Activated naive CD4-positive, alpha-beta T cell treated with anti-CD3 and anti-CD28 coated beads for 36 hours (primary cell): ENCODE measurements at regions of chr3 and their contacts with region 1.

Region 1: GRCh38 chr3:72134989-72135451 is 350.1 kb upstream of the PROK2 start:
- DNase-seq: peak; percentile 18
- H3K4me3 Mint-ChIP-seq: peak overlapping the region; percentile 49
- H3K27ac Mint-ChIP-seq: peak overlapping the region; percentile 78
- H3K4me1 Mint-ChIP-seq: peaks cover 47% of the 10 kb centered on the region
- H3K27me3 Mint-ChIP-seq: peaks cover 4% of the 10 kb centered on the region

Region 2: DNA sequence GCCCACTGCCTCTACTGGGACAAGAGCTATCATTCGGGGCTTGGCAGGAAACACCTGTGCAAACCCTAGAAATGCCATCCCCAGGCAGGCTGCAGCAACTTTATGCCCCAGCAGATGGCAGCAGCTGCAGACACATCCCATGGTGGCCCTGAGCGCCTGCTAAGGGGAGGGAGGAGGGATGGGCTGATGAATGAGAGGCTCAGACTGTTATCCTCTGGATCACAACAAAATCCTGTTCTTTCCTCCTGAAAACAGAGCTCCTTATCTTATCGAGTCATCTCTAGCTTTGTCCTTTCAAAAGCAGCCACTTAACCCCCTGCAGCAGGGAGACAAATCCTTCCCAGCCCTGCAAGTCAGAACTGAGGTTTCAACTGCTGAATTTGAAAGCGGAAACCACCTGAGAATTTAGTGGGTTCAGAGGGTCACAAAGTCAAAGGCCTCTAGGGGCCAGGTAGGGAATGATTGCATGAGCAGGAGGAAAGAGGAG is 259.5 kb before region 1 on chr3:
- CTCF ChIA-PET with region 1: interaction called, 4 read pairs
- intact Hi-C with region 1: loop called (anchors 1 kb)
- DNase-seq: peak; percentile 92
- H3K4me3 Mint-ChIP-seq: no peak overlapping the region
- H3K27ac Mint-ChIP-seq: peak overlapping the region; percentile 76
- H3K4me1 Mint-ChIP-seq: peaks cover 35% of the 10 kb centered on the region
- H3K27me3 Mint-ChIP-seq: no peaks in the 10 kb centered on the region

Region 3: GRCh38 chr3:71984843-71985613 is 150.0 kb before region 1 on chr3:
- CTCF ChIA-PET with region 1: no interaction called
- intact Hi-C with region 1: loop called (anchors 1 kb)
- DNase-seq: peak; percentile 76
- H3K4me3 Mint-ChIP-seq: peak overlapping the region; percentile 48
- H3K27ac Mint-ChIP-seq: peak overlapping the region; percentile 84
- H3K4me1 Mint-ChIP-seq: peaks cover 43% of the 10 kb centered on the region
- H3K27me3 Mint-ChIP-seq: peaks cover 6% of the 10 kb centered on the region

Region 4: GRCh38 chr3:72339116-72340030 is 204.4 kb after region 1 on chr3:
- CTCF ChIA-PET with region 1: no interaction called
- intact Hi-C with region 1: loop called (anchors 1 kb)
- DNase-seq: no peak
- H3K4me3 Mint-ChIP-seq: no peak overlapping the region
- H3K27ac Mint-ChIP-seq: no peak overlapping the region
- H3K4me1 Mint-ChIP-seq: peaks cover 36% of the 10 kb centered on the region
- H3K27me3 Mint-ChIP-seq: no peaks in the 10 kb centered on the region

Region 5: GRCh38 chr3:72447059-72447946 is 312.3 kb after region 1 on chr3:
- CTCF ChIA-PET with region 1: no interaction called
- intact Hi-C with region 1: loop called (anchors 1 kb)
- DNase-seq: peak; percentile 88
- H3K4me3 Mint-ChIP-seq: peak overlapping the region; percentile 54
- H3K27ac Mint-ChIP-seq: no peak overlapping the region
- H3K4me1 Mint-ChIP-seq: peaks cover 37% of the 10 kb centered on the region
- H3K27me3 Mint-ChIP-seq: peaks cover 12% of the 10 kb centered on the region

Region 6: DNA sequence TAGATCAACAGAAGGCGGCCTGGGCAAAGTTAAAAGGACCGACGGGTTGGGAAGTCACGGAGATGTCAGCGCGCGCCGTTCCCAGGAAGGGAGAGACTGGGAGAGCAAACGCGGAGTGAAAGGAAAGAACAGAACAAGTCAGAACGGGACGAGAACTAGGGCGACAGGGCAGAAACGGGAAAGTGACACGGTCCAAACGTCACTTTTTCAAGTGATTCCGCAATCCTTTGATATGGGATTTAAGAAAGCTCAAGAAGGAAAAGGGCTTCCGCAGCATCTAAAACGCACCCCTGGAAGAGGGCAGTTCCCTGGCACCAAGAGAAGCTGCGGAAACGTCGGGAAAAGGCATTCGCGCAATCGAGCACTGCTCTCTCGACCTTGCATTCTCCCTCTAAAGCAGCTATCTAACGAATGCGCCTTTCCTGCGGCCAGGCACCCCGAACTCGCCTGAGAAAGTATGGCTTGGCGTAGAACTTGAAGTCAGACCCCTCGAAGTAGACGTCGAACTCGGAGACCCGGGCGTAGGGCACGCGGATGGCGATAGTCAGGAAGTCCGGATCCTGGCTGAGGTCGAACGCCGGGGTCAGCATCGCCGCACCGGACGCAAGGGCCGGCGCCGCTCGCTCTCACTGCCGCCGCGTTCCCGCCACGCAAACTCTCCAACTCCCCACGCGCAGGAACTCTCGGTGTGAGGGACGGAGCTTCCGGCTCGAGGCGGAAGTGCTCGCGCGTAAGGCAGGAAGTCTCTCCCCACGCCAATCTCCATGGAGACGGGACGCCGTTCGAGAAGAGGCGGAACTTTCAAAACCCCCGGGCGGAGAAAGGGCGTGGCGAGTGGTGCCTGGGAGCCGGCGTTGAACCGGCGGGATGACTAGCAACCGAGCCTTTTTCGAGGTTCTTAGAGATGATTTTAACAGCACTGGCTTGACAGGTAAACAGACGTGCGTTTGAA is 713.0 kb after region 1 on chr3 and contains the start of gene SHQ1:
- CTCF ChIA-PET with region 1: no interaction called
- intact Hi-C with region 1: loop called (anchors 1 kb)
- DNase-seq: peak; percentile 98
- H3K4me3 Mint-ChIP-seq: peak within 1 kb of the TSS; percentile 97
- H3K27ac Mint-ChIP-seq: peak within 1 kb of the TSS; percentile 57
- H3K4me1 Mint-ChIP-seq: peaks cover 47% of the 10 kb centered on the region
- H3K27me3 Mint-ChIP-seq: no peaks in the 10 kb centered on the region
- total RNA-seq, gene SHQ1: 19.9 to 20.5 TPM